WTC11 (cell line): ENCODE measurements at regions of chr7 and their contacts with region 1.

Region 1: DNA sequence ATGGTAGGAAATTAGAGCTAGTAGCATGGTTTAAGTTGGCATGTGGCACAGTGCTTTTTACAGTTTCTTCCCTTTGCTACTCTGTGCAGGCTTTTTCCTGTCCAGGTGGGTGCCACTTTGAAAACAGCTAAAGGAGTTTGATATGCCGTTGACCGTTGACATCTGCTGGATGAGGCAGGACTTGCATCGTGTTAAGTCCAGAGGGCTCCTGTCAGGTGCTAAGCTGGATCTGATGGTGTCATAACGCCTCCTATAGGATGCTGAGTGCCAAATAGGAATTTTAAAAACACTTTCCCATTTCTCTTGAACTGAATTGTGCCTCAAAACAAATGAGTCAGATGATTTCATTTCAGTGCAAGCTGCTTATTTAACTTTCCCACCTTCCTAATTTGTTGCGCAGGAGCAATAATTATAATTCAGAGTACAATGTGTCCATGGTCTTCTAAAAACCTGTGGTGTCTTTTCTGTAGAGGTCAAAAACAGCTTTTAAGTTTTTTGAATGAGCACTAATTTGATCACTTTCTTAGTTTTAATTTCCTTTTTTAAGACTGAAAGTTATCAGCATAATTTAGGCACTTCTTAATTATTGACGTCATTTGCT is 178.3 kb downstream of the CDCA7L start:
- DNase-seq: peak; percentile 65
- ATAC-seq: peak; percentile 89
- H3K4me3 Mint-ChIP-seq: no peak overlapping the region
- H3K27ac Mint-ChIP-seq: no peak overlapping the region
- H3K4me1 Mint-ChIP-seq: peaks cover 61% of the 10 kb centered on the region
- H3K27me3 Mint-ChIP-seq: no peaks in the 10 kb centered on the region
- CTCF ChIP-seq: peak; percentile 40

Region 2: DNA sequence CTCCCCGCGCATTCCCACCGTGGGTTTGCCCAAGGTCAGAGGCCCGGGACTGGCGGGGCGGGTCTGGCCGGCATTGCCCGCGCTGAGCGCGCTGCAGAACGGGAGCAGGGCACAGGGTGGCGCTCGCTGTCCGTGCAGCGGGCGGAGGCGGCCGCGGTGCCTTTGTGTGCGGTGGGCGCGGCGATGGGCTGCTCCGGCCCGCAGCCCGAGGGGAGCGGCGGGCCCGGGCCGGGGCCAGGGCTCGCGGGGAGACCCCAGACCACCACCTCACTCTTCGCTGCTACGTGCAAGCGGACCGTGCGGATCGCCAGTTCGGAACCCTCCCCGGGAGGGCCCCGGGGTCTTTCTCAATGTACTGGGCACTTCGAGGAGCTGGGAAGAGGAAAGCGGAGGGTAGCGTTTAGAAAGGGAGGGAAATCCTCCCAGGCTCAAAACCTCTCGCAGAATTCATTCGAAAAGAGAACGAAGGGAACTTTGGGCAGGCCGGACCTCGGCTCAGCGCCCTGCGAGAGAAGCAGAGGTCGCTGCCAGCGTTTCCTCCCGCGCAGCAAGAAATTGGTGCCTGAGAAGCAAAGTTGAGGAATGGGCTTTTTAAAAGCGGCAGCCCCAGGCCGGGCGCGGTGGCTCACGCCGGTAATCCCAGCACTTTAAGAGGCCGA is 989.2 kb before region 1 on chr7:
- CTCF ChIA-PET with region 1: interaction called, 11 read pairs
- POLR2A ChIA-PET with region 1: no interaction called
- DNase-seq: peak; percentile 86
- ATAC-seq: peak; percentile 86
- H3K4me3 Mint-ChIP-seq: peak overlapping the region; percentile 77
- H3K27ac Mint-ChIP-seq: peak overlapping the region; percentile 79
- H3K4me1 Mint-ChIP-seq: peaks cover 79% of the 10 kb centered on the region
- H3K27me3 Mint-ChIP-seq: peaks cover 21% of the 10 kb centered on the region
- CTCF ChIP-seq: peak; percentile 69

Region 3: DNA sequence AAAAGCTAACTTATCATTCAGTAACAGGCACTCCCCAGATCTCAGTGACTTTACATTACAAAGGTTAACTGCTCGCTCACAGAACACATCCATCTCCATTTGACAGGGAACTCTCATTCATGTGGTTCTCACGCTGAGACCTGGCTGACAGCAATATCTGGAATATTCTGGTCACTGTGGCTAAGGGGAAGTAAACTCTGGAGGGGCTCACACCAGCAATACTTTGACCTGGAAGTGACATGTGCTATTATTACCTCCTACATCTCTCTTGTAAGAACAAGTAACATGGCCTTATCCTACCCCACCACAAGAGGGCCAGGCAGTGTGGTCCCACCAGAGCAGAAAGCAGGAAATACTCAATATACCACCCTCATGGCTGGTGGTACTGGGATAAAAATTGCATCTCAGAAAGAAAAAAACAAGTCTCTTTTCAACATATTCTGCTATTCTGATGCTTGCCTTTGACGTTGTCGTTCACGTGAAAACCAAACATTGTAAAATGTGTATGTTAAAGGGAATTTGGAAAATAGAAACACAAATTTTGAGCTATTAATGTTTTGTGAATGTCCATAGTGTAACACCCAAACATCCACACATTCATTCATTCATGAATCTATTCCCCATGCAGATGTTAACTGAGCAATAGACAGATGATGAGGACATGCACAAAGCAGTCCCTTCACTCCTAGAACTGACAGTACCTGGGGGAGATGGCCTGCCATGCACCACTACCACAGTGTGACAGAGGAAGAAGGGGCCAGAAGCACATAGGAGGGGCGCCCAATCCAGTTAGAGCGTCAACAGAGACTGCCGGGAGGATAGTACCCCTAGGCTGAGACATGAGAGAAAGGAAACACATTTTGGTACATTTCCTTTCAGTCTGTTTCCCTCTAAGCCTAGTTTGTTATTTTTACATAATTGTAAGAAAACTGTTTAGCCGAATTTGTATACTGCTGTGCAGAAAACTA is 505.5 kb before region 1 on chr7:
- CTCF ChIA-PET with region 1: interaction called, 24 read pairs
- POLR2A ChIA-PET with region 1: no interaction called
- DNase-seq: peak; percentile 58
- ATAC-seq: peak; percentile 91
- H3K4me3 Mint-ChIP-seq: peak overlapping the region; percentile 14; the same call in 1 of the 2 replicates
- H3K27ac Mint-ChIP-seq: no peak overlapping the region; the same call in 1 of the 2 replicates
- H3K4me1 Mint-ChIP-seq: peaks cover 24% of the 10 kb centered on the region
- H3K27me3 Mint-ChIP-seq: no peaks in the 10 kb centered on the region
- CTCF ChIP-seq: peak; percentile 43; the same call in 1 of the 2 replicates

Region 4: DNA sequence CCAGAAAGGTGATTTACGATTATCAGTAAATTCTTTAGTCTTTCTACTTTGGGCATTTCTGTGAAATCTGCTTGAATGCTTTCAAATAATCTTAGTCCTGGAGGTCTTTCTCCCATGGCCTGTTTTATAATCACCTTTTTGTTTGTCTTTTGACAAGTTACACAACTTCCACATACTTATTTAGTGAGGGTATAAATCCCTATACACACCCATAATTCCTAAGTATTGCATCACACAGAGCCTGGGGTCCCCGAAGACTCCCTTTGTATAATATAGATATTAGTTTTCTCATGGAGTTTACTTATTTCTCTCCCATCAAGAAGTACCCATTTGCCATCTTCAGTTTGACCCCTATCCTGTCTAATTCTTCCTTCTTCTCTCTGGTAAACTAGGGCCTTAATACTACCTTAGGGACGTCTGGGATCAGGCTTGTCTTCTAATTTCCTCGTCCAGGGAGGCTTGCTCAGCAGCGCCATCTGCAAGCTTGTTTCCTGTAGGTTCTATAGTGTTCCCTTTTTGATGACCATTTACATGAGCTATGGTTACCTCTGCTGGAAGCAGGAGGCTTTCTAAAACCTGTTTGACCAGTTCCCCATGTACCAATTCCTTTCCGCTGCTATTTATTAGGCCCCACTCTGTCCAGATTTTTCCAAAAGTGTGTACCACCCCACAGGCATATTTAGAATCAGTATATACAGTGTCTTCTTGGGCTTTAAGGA is 216.4 kb before region 1 on chr7:
- CTCF ChIA-PET with region 1: interaction called, 24 read pairs
- POLR2A ChIA-PET with region 1: no interaction called
- DNase-seq: peak; percentile 52
- ATAC-seq: peak; percentile 97
- H3K4me3 Mint-ChIP-seq: no peak overlapping the region
- H3K27ac Mint-ChIP-seq: no peak overlapping the region; the same call in 1 of the 2 replicates
- H3K4me1 Mint-ChIP-seq: peaks cover 26% of the 10 kb centered on the region
- H3K27me3 Mint-ChIP-seq: no peaks in the 10 kb centered on the region
- CTCF ChIP-seq: no peak

Region 5: GRCh38 chr7:21568762-21569161 is 198.6 kb before region 1 on chr7:
- CTCF ChIA-PET with region 1: interaction called, 21 read pairs
- POLR2A ChIA-PET with region 1: no interaction called
- DNase-seq: no peak
- ATAC-seq: peak; percentile 65
- H3K4me3 Mint-ChIP-seq: no peak overlapping the region
- H3K27ac Mint-ChIP-seq: no peak overlapping the region
- H3K4me1 Mint-ChIP-seq: peaks cover 9% of the 10 kb centered on the region
- H3K27me3 Mint-ChIP-seq: no peaks in the 10 kb centered on the region
- CTCF ChIP-seq: no peak

Region 6: DNA sequence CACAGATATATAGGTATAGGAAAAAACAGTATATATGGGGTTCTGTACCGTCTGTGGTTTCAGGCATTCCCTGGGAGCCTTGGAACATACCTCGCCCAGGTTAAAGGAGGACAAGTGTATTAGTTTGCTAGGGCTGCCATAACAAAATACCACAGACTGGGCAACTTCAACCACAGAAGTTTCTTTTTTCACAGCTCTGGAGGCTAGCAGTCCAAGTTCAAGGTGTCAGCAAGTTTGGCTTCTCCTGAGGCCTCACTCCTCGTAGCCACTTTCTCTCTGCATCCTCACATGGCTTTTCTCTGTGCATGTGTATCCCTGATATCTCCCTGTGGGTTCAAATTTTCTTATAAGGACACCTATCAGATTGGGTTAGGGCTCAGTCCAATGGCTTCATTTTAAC is 35.4 kb before region 1 on chr7:
- CTCF ChIA-PET with region 1: no interaction called
- POLR2A ChIA-PET with region 1: no interaction called
- DNase-seq: no peak
- ATAC-seq: no peak
- H3K4me3 Mint-ChIP-seq: no peak overlapping the region
- H3K27ac Mint-ChIP-seq: no peak overlapping the region
- H3K4me1 Mint-ChIP-seq: no peaks in the 10 kb centered on the region
- H3K27me3 Mint-ChIP-seq: no peaks in the 10 kb centered on the region
- CTCF ChIP-seq: no peak

Region 7: GRCh38 chr7:21753071-21753470 is 14.3 kb before region 1 on chr7:
- CTCF ChIA-PET with region 1: interaction called, 18 read pairs
- POLR2A ChIA-PET with region 1: no interaction called
- DNase-seq: no peak
- ATAC-seq: peak; percentile 84
- H3K4me3 Mint-ChIP-seq: no peak overlapping the region
- H3K27ac Mint-ChIP-seq: no peak overlapping the region
- H3K4me1 Mint-ChIP-seq: peaks cover 44% of the 10 kb centered on the region
- H3K27me3 Mint-ChIP-seq: no peaks in the 10 kb centered on the region
- CTCF ChIP-seq: no peak

Region 8: DNA sequence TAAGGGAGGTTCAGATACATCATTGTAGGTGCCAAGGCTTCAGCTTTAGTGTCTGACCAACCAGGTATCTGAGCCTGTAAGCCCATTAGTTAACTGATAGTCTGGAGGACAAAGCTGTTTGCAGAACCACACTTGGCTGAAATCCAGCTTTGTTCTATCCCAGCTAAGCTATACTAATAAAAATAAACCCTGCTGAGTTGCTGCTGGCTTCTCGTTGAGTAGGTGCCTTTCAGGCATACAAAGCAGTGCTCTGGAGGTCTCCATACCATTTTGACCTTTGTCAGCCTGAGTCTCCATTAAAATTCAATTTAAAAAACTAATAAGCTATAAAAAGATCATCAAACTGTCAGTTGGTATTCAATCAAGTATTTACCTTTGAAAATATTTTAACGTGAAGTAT is 156.3 kb after region 1 on chr7:
- CTCF ChIA-PET with region 1: no interaction called
- POLR2A ChIA-PET with region 1: no interaction called
- DNase-seq: no peak
- ATAC-seq: peak; percentile 68
- H3K4me3 Mint-ChIP-seq: no peak overlapping the region
- H3K27ac Mint-ChIP-seq: no peak overlapping the region
- H3K4me1 Mint-ChIP-seq: peaks cover 73% of the 10 kb centered on the region
- H3K27me3 Mint-ChIP-seq: no peaks in the 10 kb centered on the region
- CTCF ChIP-seq: no peak

Region 9: GRCh38 chr7:22082886-22083703 is 315.7 kb after region 1 on chr7:
- CTCF ChIA-PET with region 1: interaction called, 23 read pairs
- POLR2A ChIA-PET with region 1: no interaction called
- DNase-seq: peak; percentile 96
- ATAC-seq: peak; percentile 94
- H3K4me3 Mint-ChIP-seq: peak overlapping the region; percentile 77
- H3K27ac Mint-ChIP-seq: peak overlapping the region; percentile 76
- H3K4me1 Mint-ChIP-seq: peaks cover 24% of the 10 kb centered on the region
- H3K27me3 Mint-ChIP-seq: peaks cover 19% of the 10 kb centered on the region
- CTCF ChIP-seq: peak; percentile 87; the same call in 1 of the 2 replicates